ENCODE measurements at regions of chr1 and their contacts with region 1.

Region 1: GRCh38 chr1:31705080-31705866 is 1.5 kb upstream of the COL16A1 start:
- DNase-seq: peak; percentile 82 to 96 (median 95)
- H3K4me3 ChIP-seq: peak overlapping the region in 3 of 7 experiments; percentile 11 to 40 (median 29)
- H3K27ac ChIP-seq: no peak overlapping the region
- H3K4me1 ChIP-seq: peaks cover 5 to 53% (median 51%) of the 10 kb centered on the region in 4 experiments
- H3K27me3 ChIP-seq: peaks cover 0 to 19% (median 4%) of the 10 kb centered on the region in 5 experiments

Region 2: DNA sequence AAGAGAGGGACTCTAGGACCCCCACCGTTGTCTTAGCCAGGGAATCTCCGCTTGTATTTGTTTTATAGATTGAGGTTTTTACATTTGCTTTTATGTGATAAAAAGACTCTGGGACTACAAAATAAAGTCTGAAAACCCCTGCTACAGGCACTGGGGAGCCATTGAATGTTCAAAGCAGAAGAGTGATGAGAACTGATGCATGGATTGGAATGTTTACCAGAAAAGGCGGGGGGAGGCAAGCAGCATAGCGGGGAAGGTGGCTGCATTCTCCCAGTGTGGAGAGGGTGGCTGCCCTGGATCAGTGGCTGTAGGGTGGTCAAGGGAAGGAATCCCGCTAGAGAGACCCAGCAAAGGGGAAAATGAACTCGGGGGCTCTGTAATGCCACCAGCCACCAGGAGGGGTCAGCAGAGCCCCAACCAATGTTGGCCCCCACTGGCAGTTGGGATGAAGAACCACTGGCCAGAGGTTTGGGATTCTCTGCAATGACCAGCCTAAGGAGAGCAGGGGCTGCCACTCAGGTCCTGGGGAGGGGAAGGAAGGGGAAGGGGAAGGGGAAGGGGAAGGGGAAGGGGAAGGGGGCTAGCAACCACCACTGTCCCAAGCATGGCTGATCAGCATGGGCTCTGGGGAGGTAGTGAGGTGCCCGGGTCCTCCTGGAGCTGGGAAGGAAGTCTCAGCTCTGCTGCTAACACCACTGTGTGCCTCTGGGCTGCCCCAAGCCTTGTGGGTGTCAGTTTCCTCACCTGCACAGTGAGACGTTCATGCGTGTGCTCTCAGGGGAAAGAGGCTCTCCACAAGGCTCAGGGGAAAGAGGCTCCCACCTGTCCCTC is 41.4 kb before region 1 on chr1:
- CTCF ChIA-PET with region 1: interaction called, 84 read pairs
- POLR2A ChIA-PET with region 1: no interaction called
- DNase-seq: peak; percentile 14 to 38 (median 15)
- H3K4me3 ChIP-seq: no peak overlapping the region
- H3K27ac ChIP-seq: no peak overlapping the region
- H3K4me1 ChIP-seq: no peaks in the 10 kb centered on the region
- H3K27me3 ChIP-seq: no peaks in the 10 kb centered on the region

Region 3: GRCh38 chr1:31669786-31670592 is 35.3 kb before region 1 on chr1:
- CTCF ChIA-PET with region 1: interaction called, 84 read pairs
- POLR2A ChIA-PET with region 1: no interaction called
- DNase-seq: peak; percentile 83 to 92 (median 92)
- H3K4me3 ChIP-seq: peak overlapping the region in 5 of 7 experiments; percentile 13 to 59 (median 50)
- H3K27ac ChIP-seq: no peak overlapping the region
- H3K4me1 ChIP-seq: peaks cover 0 to 18% (median 13%) of the 10 kb centered on the region in 4 experiments
- H3K27me3 ChIP-seq: peaks cover 0 to 3% (median 0%) of the 10 kb centered on the region in 5 experiments

Region 4: DNA sequence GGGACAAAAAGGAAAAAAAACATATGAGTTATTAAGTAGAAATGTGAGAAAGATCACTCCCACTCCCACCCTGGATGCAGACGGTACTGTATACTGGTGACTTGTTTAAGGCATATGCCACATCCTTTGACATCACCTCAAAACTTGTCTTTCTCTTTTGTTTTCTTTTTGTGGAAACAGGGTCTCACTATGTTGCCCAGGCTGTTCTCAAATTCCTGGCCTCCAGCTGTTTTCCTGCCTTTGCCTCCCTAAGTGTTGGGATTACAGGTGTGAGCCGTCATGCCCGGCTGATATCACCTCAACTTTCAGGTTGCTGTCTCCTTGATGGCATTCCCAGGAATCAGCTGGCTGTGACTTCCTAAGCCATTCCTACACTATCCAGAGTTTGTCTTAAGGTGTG is 290.0 kb after region 1 on chr1:
- CTCF ChIA-PET with region 1: no interaction called
- POLR2A ChIA-PET with region 1: no interaction called
- DNase-seq: no peak
- H3K4me3 ChIP-seq: no peak overlapping the region
- H3K27ac ChIP-seq: no peak overlapping the region
- H3K4me1 ChIP-seq: no peaks in the 10 kb centered on the region
- H3K27me3 ChIP-seq: no peaks in the 10 kb centered on the region

Measured in common myeloid progenitor, CD34-positive (primary cell).